CD4-positive, alpha-beta memory T cell (primary cell): ENCODE measurements at regions of chr11 and their contacts with region 1.

Region 1: GRCh38 chr11:1335811-1336761 is 26.7 kb upstream of the TOLLIP start:
- DNase-seq: peak; percentile 44 to 75 (median 55)
- H3K4me3 ChIP-seq: peak overlapping the region; percentile 38 to 39
- H3K4me3 Mint-ChIP-seq: peak overlapping the region; percentile 71 to 89 (median 80)
- H3K27ac ChIP-seq: peak overlapping the region; percentile 27
- H3K27ac Mint-ChIP-seq: peak overlapping the region; percentile 49 to 92 (median 79)
- H3K4me1 ChIP-seq: peaks cover 12% of the 10 kb centered on the region
- H3K4me1 Mint-ChIP-seq: peaks cover 9 to 12% (median 11%) of the 10 kb centered on the region in 4 donors
- H3K27me3 ChIP-seq: no peaks in the 10 kb centered on the region
- H3K27me3 Mint-ChIP-seq: peaks cover 0 to 3% of the 10 kb centered on the region in 2 donors

Region 2: GRCh38 chr11:1262172-1263006 is 73.7 kb before region 1 on chr11:
- CTCF ChIA-PET with region 1: no interaction called
- POLR2A ChIA-PET with region 1: no interaction called
- intact Hi-C with region 1: loop called (anchors 10 kb)
- DNase-seq: peak; percentile 86 to 89 (median 87)
- H3K4me3 ChIP-seq: peak overlapping the region; percentile 65 to 71
- H3K4me3 Mint-ChIP-seq: peak overlapping the region; percentile 79 to 93 (median 86)
- H3K27ac ChIP-seq: peak overlapping the region; percentile 77
- H3K27ac Mint-ChIP-seq: peak overlapping the region; percentile 67 to 97 (median 92)
- H3K4me1 ChIP-seq: peaks cover 17% of the 10 kb centered on the region
- H3K4me1 Mint-ChIP-seq: peaks cover 7 to 23% (median 12%) of the 10 kb centered on the region in 4 donors
- H3K27me3 ChIP-seq: no peaks in the 10 kb centered on the region
- H3K27me3 Mint-ChIP-seq: no peaks in the 10 kb centered on the region

Region 3: DNA sequence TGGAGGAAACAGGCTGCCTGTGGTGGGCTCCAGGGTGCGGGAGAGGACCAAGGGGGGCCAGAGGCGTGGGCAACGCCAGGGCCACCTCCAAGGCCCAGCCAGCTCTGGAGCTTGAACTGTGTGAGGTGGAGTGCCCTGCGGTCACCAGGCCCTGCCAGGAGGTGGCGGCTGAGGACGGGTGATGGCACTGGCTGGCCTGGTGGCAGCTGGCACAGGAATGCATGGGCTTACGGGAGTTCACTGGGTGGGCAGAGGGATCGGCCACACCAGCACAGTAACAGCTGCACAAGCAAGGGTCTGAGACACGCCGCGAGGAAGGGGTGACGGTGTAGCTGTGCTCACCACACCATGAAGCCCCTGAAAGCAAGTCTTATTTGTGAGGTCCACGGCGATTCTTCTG is 42.5 kb before region 1 on chr11:
- CTCF ChIA-PET with region 1: no interaction called
- POLR2A ChIA-PET with region 1: no interaction called
- intact Hi-C with region 1: no loop called
- DNase-seq: no peak
- H3K4me3 ChIP-seq: no peak overlapping the region
- H3K4me3 Mint-ChIP-seq: no peak overlapping the region
- H3K27ac ChIP-seq: no peak overlapping the region
- H3K27ac Mint-ChIP-seq: no peak overlapping the region
- H3K4me1 ChIP-seq: no peaks in the 10 kb centered on the region
- H3K4me1 Mint-ChIP-seq: peaks cover 0 to 12% (median 4%) of the 10 kb centered on the region in 4 donors
- H3K27me3 ChIP-seq: no peaks in the 10 kb centered on the region
- H3K27me3 Mint-ChIP-seq: no peaks in the 10 kb centered on the region

Region 4: GRCh38 chr11:1382831-1383607 is 46.9 kb after region 1 on chr11:
- CTCF ChIA-PET with region 1: no interaction called
- POLR2A ChIA-PET with region 1: interaction called, 3 read pairs
- intact Hi-C with region 1: loop called (anchors 2 kb)
- DNase-seq: peak; percentile 72 to 86 (median 74)
- H3K4me3 ChIP-seq: peak overlapping the region in 1 of 2 donors; percentile 57
- H3K4me3 Mint-ChIP-seq: peak overlapping the region; percentile 77 to 90 (median 82)
- H3K27ac ChIP-seq: peak overlapping the region; percentile 79
- H3K27ac Mint-ChIP-seq: peak overlapping the region; percentile 87 to 94 (median 92)
- H3K4me1 ChIP-seq: no peaks in the 10 kb centered on the region
- H3K4me1 Mint-ChIP-seq: peaks cover 2 to 47% (median 10%) of the 10 kb centered on the region in 4 donors
- H3K27me3 ChIP-seq: no peaks in the 10 kb centered on the region
- H3K27me3 Mint-ChIP-seq: no peaks in the 10 kb centered on the region

Region 5: DNA sequence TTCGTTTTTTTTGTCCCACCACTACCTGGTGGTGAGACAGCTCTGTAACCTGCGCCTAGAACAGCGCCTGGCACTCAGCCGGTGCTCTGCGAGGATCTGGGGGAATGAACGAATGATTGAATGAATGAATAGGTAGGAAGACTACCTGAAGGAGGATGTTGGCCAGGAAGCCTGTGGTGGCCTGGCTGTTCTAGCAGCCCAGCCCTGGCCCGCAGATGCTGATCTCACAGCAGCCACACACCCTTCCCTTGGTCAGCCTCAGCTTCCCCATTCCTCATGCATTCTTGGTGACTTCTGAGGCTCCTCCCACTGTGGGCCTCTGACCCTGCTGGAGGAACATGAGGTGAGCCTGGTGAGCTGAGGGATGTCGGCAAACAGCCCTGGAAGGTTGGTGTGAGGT is 1104.6 kb after region 1 on chr11:
- CTCF ChIA-PET with region 1: no interaction called
- POLR2A ChIA-PET with region 1: no interaction called
- intact Hi-C with region 1: no loop called
- DNase-seq: no peak
- H3K4me3 ChIP-seq: no peak overlapping the region
- H3K4me3 Mint-ChIP-seq: no peak overlapping the region
- H3K27ac ChIP-seq: no peak overlapping the region
- H3K27ac Mint-ChIP-seq: peak overlapping the region in 1 of 7 donors; percentile 42
- H3K4me1 ChIP-seq: peaks cover 25% of the 10 kb centered on the region
- H3K4me1 Mint-ChIP-seq: peaks cover 20 to 26% (median 23%) of the 10 kb centered on the region in 4 donors
- H3K27me3 ChIP-seq: no peaks in the 10 kb centered on the region
- H3K27me3 Mint-ChIP-seq: no peaks in the 10 kb centered on the region